ENCODE measurements at regions of chr19 and their contacts with region 1.

Region 1: GRCh38 chr19:17266975-17267788 is at the start of gene BABAM1:
- DNase-seq: peak; percentile 97 to 98
- H3K4me3 ChIP-seq: peak within 1 kb of the TSS; percentile 93
- H3K4me3 Mint-ChIP-seq: peak within 1 kb of the TSS; percentile 74
- H3K27ac Mint-ChIP-seq: peak within 1 kb of the TSS; percentile 80
- H3K4me1 ChIP-seq: no peaks in the 10 kb centered on the region; the same call in 1 of the 2 replicates
- H3K4me1 Mint-ChIP-seq: peaks cover 7% of the 10 kb centered on the region
- H3K27me3 ChIP-seq: no peaks in the 10 kb centered on the region
- H3K27me3 Mint-ChIP-seq: no peaks in the 10 kb centered on the region
- CTCF ChIP-seq: no peak
- total RNA-seq, gene BABAM1: 91.7 and 98.8 TPM in 2 replicates

Region 2: DNA sequence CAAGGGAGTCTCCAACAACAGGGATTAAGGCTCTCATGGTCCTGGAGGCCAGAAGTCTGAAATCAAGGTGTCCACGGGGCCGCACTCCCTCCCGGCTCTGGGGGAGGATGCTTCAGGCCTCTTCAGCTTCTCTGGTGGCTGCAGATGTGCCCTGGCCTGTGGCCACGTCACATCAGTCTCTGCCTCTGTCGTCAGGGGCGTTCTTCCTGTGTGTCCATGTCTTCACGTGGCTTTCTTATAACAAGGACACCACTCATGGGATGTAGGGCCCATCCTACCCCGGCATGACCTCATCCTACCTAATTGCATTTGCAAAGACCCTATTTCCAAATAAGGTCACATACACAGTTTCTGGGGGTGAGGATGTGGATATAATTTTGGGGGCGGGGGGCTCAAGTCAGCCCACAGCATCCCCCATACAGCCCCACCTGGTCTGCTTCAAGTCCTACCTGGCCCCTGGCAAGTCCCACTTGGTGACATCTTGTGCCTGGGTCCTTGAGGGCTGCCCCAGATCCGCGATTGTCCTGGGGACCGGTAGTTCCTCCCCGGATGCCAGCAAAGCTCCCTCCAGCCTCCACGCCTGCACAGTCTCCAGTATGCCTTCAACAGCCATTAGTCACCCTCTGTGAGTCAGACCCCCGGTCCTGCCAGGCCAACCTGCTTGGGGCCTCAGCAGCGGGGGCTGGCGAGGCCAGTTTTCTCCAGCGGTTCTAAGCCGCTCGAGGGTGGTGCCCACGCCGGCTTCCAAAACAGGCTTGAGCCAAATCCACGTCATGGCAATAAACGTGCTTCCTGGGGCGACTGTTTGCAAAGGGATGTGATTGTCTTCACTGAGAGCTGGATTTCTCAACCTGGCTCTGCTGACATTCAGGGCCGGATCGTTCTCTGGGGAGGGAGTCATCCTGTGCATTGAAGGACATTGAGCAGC is 159.4 kb before region 1 on chr19:
- CTCF ChIA-PET with region 1: no interaction called
- POLR2A ChIA-PET with region 1: no interaction called
- intact Hi-C with region 1: no loop called
- DNase-seq: no peak
- H3K4me3 ChIP-seq: no peak overlapping the region
- H3K4me3 Mint-ChIP-seq: no peak overlapping the region
- H3K27ac Mint-ChIP-seq: no peak overlapping the region
- H3K4me1 ChIP-seq: no peaks in the 10 kb centered on the region
- H3K4me1 Mint-ChIP-seq: no peaks in the 10 kb centered on the region
- H3K27me3 ChIP-seq: no peaks in the 10 kb centered on the region
- H3K27me3 Mint-ChIP-seq: no peaks in the 10 kb centered on the region
- CTCF ChIP-seq: no peak

Region 3: GRCh38 chr19:17183858-17184321 is 83.3 kb before region 1 on chr19:
- CTCF ChIA-PET with region 1: no interaction called
- POLR2A ChIA-PET with region 1: no interaction called
- intact Hi-C with region 1: no loop called
- DNase-seq: no peak
- H3K4me3 ChIP-seq: no peak overlapping the region
- H3K4me3 Mint-ChIP-seq: no peak overlapping the region
- H3K27ac Mint-ChIP-seq: no peak overlapping the region
- H3K4me1 ChIP-seq: no peaks in the 10 kb centered on the region
- H3K4me1 Mint-ChIP-seq: no peaks in the 10 kb centered on the region
- H3K27me3 ChIP-seq: no peaks in the 10 kb centered on the region
- H3K27me3 Mint-ChIP-seq: no peaks in the 10 kb centered on the region
- CTCF ChIP-seq: no peak

Region 4: GRCh38 chr19:17215125-17215971 is 51.8 kb before region 1 on chr19 and contains the start of gene USE1:
- CTCF ChIA-PET with region 1: no interaction called
- POLR2A ChIA-PET with region 1: interaction called, 16 read pairs
- intact Hi-C with region 1: loop called (anchors 1 kb)
- DNase-seq: peak; percentile 87 to 89
- H3K4me3 ChIP-seq: peak within 1 kb of the TSS; percentile 86
- H3K4me3 Mint-ChIP-seq: peak within 1 kb of the TSS; percentile 95
- H3K27ac Mint-ChIP-seq: peak within 1 kb of the TSS; percentile 98
- H3K4me1 ChIP-seq: peaks cover 11% of the 10 kb centered on the region; the same call in 1 of the 2 replicates
- H3K4me1 Mint-ChIP-seq: no peaks in the 10 kb centered on the region
- H3K27me3 ChIP-seq: no peaks in the 10 kb centered on the region
- H3K27me3 Mint-ChIP-seq: no peaks in the 10 kb centered on the region
- CTCF ChIP-seq: no peak
- total RNA-seq, gene USE1: 20.2 and 20.7 TPM in 2 replicates

Region 5: DNA sequence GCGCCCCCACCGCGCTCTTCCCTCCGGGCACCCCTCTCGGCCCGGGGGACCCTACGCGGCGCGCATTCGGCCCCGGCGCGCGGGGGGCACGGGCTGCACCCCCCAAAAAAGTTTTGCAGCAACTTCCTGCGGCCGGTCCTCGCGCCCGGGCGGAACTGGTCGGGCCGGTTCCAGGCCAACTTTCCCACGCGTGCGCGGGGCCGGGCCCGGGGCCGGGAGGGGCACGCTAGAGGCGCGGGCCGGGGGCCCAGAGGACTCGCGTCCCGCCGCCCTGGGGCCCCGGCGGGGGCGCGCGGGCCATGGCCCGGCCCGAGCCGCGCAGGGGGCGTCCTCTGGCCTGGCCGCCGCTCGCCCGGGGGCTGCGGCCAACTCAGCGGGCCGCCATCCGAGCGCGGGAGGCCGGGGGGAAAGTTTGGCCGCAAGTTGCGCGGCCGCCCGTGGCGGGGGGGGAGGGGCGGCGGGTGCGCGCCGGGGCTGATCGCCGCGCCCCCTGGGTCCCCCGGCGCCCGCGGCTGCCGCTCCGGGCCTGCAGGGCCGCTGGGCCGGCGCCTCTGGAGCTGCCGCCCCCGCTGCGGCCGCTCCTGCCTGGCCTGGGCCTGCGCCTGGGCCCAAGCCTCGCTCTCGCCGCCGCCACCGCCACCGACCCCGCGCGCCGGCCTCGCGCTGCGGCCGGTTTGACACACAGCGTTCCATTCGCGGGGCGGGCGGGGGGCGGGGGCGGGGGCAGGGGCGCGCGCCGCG is 21.8 kb before region 1 on chr19 and contains the start of gene NR2F6:
- CTCF ChIA-PET with region 1: interaction called, 3 read pairs
- POLR2A ChIA-PET with region 1: interaction called, 15 read pairs
- intact Hi-C with region 1: no loop called
- DNase-seq: peak in 1 of 2 experiments; percentile 61
- H3K4me3 ChIP-seq: peak within 1 kb of the TSS; percentile 78
- H3K4me3 Mint-ChIP-seq: peak within 1 kb of the TSS; percentile 94
- H3K27ac Mint-ChIP-seq: peak within 1 kb of the TSS; percentile 92
- H3K4me1 ChIP-seq: peaks cover 63% of the 10 kb centered on the region
- H3K4me1 Mint-ChIP-seq: peaks cover 30% of the 10 kb centered on the region
- H3K27me3 ChIP-seq: no peaks in the 10 kb centered on the region
- H3K27me3 Mint-ChIP-seq: no peaks in the 10 kb centered on the region
- CTCF ChIP-seq: no peak
- total RNA-seq, gene NR2F6: 94.4 and 96.5 TPM in 2 replicates

Measured in Caco-2 (cell line).